ENCODE measurements at regions of chr5 and their contacts with region 1.

Region 1: GRCh38 chr5:151115274-151115905 is 34.6 kb upstream of the TNIP1 start:
- DNase-seq: peak; percentile 81
- ATAC-seq: peak; percentile 93
- H3K4me3 Mint-ChIP-seq: no peak overlapping the region
- H3K27ac Mint-ChIP-seq: no peak overlapping the region
- H3K4me1 Mint-ChIP-seq: peaks cover 6% of the 10 kb centered on the region
- H3K27me3 Mint-ChIP-seq: no peaks in the 10 kb centered on the region
- CTCF ChIP-seq: peak; percentile 97

Region 2: DNA sequence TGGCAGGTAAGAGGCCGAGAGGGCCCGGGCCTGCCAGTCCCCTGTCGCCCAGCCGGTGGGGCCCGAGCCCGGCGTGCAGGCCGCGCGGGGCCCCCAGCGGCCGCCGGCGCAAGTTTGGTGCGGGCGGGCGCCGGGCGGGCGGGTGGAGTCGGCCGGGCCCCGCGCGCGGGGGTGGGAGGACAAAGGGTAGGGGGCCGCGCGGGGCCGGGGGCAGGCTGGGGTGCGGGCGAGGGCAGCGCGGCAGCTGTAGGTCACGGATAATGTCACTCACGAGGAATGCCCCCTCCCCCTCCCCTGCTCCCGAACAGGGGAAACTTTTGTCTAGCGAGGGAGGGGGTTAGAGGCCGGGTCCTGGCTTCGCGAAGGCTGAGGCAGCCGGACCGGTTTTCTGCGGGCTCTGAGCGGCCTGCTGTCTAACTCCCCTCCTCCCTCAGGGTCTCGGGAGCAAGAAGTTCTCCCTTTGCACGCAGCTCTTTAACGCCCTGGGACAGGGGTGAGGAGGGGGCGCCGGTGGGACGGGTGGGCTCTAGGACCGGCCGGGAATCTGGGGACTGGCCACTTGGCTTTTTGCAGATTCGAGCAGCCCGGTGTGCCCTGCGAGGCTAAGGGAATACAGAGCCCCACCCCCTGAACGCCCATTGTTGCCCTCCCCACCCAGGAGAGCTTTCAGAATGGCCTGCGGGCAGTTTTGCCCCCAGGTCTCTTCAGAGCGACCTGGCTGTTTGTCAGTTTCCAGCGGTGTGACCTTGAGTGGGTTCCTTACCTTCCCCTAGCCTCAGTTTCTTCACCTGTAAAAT is 628.8 kb before region 1 on chr5:
- CTCF ChIA-PET with region 1: no interaction called
- POLR2A ChIA-PET with region 1: no interaction called
- intact Hi-C with region 1: no loop called
- DNase-seq: peak; percentile 42
- ATAC-seq: peak; percentile 67
- H3K4me3 Mint-ChIP-seq: peak overlapping the region; percentile 58
- H3K27ac Mint-ChIP-seq: no peak overlapping the region
- H3K4me1 Mint-ChIP-seq: peaks cover 7% of the 10 kb centered on the region
- H3K27me3 Mint-ChIP-seq: peaks cover 6% of the 10 kb centered on the region
- CTCF ChIP-seq: no peak

Region 3: GRCh38 chr5:151002250-151002649 is 113.1 kb before region 1 on chr5:
- CTCF ChIA-PET with region 1: interaction called, 11 read pairs
- POLR2A ChIA-PET with region 1: interaction called, 3 read pairs
- intact Hi-C with region 1: no loop called
- DNase-seq: no peak
- ATAC-seq: no peak
- H3K4me3 Mint-ChIP-seq: no peak overlapping the region
- H3K27ac Mint-ChIP-seq: no peak overlapping the region
- H3K4me1 Mint-ChIP-seq: no peaks in the 10 kb centered on the region
- H3K27me3 Mint-ChIP-seq: no peaks in the 10 kb centered on the region
- CTCF ChIP-seq: no peak

Region 4: DNA sequence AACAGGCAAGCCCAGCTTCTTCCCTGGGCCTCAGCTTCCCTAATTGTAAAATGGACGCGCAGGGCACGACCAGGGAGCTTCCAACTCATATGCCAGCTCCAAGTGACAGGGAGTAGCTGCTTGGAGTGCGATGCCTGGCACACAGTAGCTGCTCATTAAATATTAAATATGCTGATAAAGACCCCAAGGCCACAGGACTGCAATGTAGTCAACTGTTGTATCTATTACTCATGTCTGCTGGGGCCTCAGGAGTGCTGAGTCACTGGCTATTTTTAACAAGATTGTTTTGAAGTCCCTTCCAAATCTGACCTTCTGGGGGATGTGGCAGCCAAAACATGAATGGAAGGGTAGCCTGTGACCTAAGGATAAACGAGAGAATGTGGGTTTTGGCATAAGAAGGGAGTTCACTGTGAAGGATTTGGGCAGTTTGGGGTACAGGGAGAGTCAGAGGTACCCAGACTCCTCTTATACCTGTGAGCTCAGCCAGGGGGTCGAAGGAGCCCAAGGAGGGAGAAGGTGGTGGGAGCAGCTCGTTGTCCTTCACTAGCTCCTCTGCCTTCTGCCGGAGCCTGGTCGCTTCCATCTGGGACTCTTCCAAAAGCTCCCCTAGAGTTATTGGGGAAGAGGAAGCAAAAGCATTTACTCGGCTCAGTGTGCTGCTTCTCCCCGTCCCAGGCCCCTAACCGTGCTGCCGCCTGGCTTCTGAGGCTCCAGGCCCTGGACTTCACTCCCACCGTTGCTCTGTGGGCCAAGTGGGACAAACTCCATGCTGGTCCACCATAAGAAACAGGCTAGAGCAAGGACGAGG is 52.0 kb before region 1 on chr5:
- CTCF ChIA-PET with region 1: interaction called, 478 read pairs
- POLR2A ChIA-PET with region 1: interaction called, 4 read pairs
- intact Hi-C with region 1: loop called (anchors 5 kb)
- DNase-seq: no peak
- ATAC-seq: no peak
- H3K4me3 Mint-ChIP-seq: no peak overlapping the region
- H3K27ac Mint-ChIP-seq: peak overlapping the region; percentile 80
- H3K4me1 Mint-ChIP-seq: peaks cover 94% of the 10 kb centered on the region
- H3K27me3 Mint-ChIP-seq: no peaks in the 10 kb centered on the region
- CTCF ChIP-seq: no peak

Region 5: DNA sequence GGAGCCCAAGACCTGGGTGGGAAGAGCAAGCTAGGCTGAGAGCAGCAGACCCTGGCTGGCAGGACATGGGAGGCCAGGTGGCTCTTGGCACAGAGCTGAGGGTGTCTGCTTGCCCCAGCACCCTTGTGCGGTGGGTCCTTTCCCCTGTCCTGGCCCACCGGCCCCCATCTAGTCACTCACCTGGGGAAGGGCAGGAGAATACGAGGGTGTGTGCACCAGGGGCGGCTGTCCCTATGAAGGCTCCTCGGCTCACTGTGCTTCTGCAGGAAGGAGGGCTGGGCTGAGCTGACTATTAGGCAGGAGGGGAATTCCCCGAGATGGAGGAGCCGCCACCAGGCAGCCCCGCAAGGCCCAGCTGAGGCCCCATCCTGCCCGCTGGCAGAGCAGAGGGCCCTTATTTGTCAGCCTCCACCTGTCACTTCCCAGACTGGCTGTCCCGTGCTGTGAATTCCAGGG is 28.5 kb before region 1 on chr5:
- CTCF ChIA-PET with region 1: interaction called, 65 read pairs
- POLR2A ChIA-PET with region 1: interaction called, 4 read pairs
- intact Hi-C with region 1: no loop called
- DNase-seq: peak; percentile 86
- ATAC-seq: peak; percentile 89
- H3K4me3 Mint-ChIP-seq: peak overlapping the region; percentile 79
- H3K27ac Mint-ChIP-seq: peak overlapping the region; percentile 70
- H3K4me1 Mint-ChIP-seq: peaks cover 66% of the 10 kb centered on the region
- H3K27me3 Mint-ChIP-seq: peaks cover 4% of the 10 kb centered on the region
- CTCF ChIP-seq: no peak

Region 6: DNA sequence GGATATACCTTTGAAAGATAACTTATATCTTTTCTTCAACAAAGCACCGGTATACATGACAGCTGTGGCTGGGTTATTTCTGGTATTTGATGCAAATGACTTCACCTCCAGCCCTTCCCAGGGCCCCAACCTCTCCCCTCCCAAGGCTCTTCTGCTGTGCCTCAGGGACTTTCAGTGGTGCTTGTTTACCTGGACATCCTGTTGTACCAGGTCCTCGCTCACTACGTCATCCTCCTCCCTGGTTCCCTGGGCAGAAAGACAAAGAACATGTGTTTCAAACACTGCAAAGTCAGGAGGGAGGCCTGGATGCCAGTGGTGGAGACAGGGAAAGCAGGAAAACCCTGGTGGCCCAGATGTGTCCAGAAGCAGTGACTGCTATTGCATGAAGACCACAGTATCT is 18.8 kb after region 1 on chr5:
- CTCF ChIA-PET with region 1: interaction called, 31 read pairs
- POLR2A ChIA-PET with region 1: no interaction called
- intact Hi-C with region 1: no loop called
- DNase-seq: no peak
- ATAC-seq: no peak
- H3K4me3 Mint-ChIP-seq: no peak overlapping the region
- H3K27ac Mint-ChIP-seq: no peak overlapping the region
- H3K4me1 Mint-ChIP-seq: peaks cover 56% of the 10 kb centered on the region
- H3K27me3 Mint-ChIP-seq: no peaks in the 10 kb centered on the region
- CTCF ChIP-seq: no peak

Region 7: DNA sequence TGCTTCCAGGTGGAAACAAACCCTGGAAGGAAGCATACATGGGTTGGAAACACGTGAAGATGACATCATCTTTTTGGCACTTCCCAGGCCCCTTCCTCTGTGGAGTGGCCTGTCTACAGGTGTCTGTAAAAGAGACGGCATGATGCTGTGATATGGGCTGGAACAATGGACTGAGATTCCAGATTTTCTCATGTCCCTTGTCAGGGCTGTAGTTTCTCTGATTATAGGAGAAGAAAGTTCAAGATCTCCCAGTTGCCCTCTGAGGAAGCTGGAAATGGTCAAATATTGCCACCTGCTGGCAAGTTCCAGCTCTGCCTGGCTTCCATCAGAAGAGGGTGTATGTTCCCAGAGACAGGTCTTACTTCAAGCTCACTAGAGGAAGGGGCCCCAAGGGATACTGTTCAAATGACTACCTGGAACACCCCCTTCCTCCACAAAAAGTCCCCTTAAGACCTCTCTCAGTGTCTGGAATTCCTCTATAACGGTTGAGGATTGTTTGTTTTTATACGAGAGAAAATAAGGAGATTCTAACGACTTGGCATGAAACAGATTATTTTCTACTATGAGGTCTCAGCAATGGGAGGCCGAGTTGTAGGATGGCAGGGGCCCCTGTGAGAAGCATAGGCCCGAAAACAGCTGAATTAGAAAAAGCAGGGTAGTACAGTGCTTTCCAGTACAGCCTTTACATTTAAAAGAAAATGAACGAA is 49.4 kb after region 1 on chr5:
- CTCF ChIA-PET with region 1: interaction called, 171 read pairs
- POLR2A ChIA-PET with region 1: interaction called, 5 read pairs
- intact Hi-C with region 1: no loop called
- DNase-seq: peak; percentile 89
- ATAC-seq: peak; percentile 97
- H3K4me3 Mint-ChIP-seq: no peak overlapping the region
- H3K27ac Mint-ChIP-seq: no peak overlapping the region
- H3K4me1 Mint-ChIP-seq: peaks cover 17% of the 10 kb centered on the region
- H3K27me3 Mint-ChIP-seq: no peaks in the 10 kb centered on the region
- CTCF ChIP-seq: peak; percentile 92